Esophagus muscularis mucosa (tissue), 4 donors: ENCODE measurements at regions of chr9 and their contacts with region 1.

Region 1: GRCh38 chr9:35464141-35465025 is 25.5 kb upstream of the RUSC2 start:
- DNase-seq: no peak
- H3K4me3 ChIP-seq: no peak overlapping the region
- H3K27ac ChIP-seq: no peak overlapping the region
- H3K4me1 ChIP-seq: no peaks in the 10 kb centered on the region
- H3K27me3 ChIP-seq: peaks cover 0 to 7% (median 0%) of the 10 kb centered on the region in 4 donors
- CTCF ChIP-seq: no peak
- EP300 ChIP-seq: no peak
- POLR2A ChIP-seq: no peak

Region 2: GRCh38 chr9:35085078-35085477 is 379.3 kb before region 1 on chr9:
- intact Hi-C with region 1: no loop called
- DNase-seq: no peak
- H3K4me3 ChIP-seq: no peak overlapping the region
- H3K27ac ChIP-seq: no peak overlapping the region
- H3K4me1 ChIP-seq: peaks cover 0 to 7% (median 5%) of the 10 kb centered on the region in 4 donors
- H3K27me3 ChIP-seq: no peaks in the 10 kb centered on the region
- CTCF ChIP-seq: no peak
- EP300 ChIP-seq: no peak
- POLR2A ChIP-seq: no peak

Region 3: GRCh38 chr9:35406183-35406956 is 58.0 kb before region 1 on chr9:
- intact Hi-C with region 1: loop called (anchors 10 kb)
- DNase-seq: no peak
- H3K4me3 ChIP-seq: peak overlapping the region in 2 of 4 donors; percentile 5 to 17
- H3K27ac ChIP-seq: no peak overlapping the region
- H3K4me1 ChIP-seq: peaks cover 0 to 9% (median 5%) of the 10 kb centered on the region in 4 donors
- H3K27me3 ChIP-seq: no peaks in the 10 kb centered on the region
- CTCF ChIP-seq: no peak
- EP300 ChIP-seq: no peak
- POLR2A ChIP-seq: no peak